ENCODE measurements at regions of chr2 and their contacts with region 1.

Region 1: DNA sequence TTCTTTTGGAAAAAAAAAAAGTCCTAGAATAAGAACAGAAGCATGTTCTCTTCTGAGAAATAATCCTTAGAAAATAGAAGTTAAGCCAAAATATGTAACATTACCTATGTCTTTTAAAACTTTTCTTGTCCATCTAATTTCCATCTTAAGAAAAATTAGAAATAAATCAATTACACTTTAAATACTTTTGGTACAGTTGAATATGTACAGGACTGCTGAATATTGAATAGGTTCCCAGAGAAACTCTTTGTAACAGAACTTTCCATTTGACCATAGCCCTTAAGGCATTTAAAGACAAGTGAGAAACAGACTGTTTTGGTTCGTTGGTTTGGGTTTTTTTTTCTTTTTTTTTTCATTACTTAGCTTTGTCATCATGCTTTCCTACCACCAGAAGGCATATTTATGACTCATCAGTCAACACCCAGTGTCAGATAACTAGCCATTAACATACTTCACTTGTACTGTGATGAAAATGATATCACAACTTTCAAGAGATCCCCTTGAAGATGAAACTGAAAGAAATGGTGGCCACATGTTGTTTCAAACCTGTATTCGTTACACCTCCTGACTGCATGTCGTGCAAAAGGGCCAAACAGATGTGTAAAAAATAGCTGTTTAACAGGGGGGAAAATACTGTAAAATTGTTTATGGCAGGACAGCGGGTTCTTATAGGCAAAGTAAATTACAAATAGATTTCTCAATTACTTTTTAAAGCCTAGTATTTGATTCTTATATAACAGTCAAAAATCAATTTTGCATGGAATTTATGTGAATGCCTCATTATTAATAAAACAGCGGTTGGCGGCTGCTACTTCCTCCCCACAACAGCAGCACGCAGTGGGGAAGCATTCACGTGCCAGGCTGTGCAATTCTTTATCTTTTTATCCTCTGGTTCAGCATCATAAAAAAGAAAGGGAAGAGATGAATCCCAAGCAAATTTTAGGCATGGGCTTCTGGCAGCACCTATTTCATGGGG is 280.7 kb upstream of the HNRNPA3 start:
- DNase-seq: no peak
- ATAC-seq: peak; percentile 89
- H3K4me3 ChIP-seq: no peak overlapping the region
- H3K4me3 Mint-ChIP-seq: peak overlapping the region in 2 of 10 donors; percentile 39 to 69
- H3K27ac ChIP-seq: no peak overlapping the region
- H3K27ac Mint-ChIP-seq: peak overlapping the region in 2 of 9 donors; percentile 11 to 90
- H3K4me1 ChIP-seq: peaks cover 0 to 7% of the 10 kb centered on the region in 2 donors
- H3K4me1 Mint-ChIP-seq: peaks cover 6 to 20% (median 8%) of the 10 kb centered on the region in 7 donors
- H3K27me3 ChIP-seq: no peaks in the 10 kb centered on the region
- H3K27me3 Mint-ChIP-seq: peaks cover 0 to 1% (median 0%) of the 10 kb centered on the region in 5 donors

Region 2: GRCh38 chr2:176821345-176821744 is 110.5 kb before region 1 on chr2:
- CTCF ChIA-PET with region 1: no interaction called
- POLR2A ChIA-PET with region 1: no interaction called
- intact Hi-C with region 1: loop called in 1 of 2 experiments (anchors 10 kb)
- DNase-seq: no peak
- ATAC-seq: no peak
- H3K4me3 ChIP-seq: no peak overlapping the region
- H3K4me3 Mint-ChIP-seq: no peak overlapping the region
- H3K27ac ChIP-seq: no peak overlapping the region
- H3K27ac Mint-ChIP-seq: peak overlapping the region in 1 of 9 donors; percentile 68
- H3K4me1 ChIP-seq: peaks cover 0 to 24% of the 10 kb centered on the region in 2 donors
- H3K4me1 Mint-ChIP-seq: peaks cover 13 to 67% (median 40%) of the 10 kb centered on the region in 7 donors
- H3K27me3 ChIP-seq: no peaks in the 10 kb centered on the region
- H3K27me3 Mint-ChIP-seq: peaks cover 0 to 9% (median 0%) of the 10 kb centered on the region in 5 donors

Region 3: GRCh38 chr2:176997074-176997791 is 65.4 kb after region 1 on chr2:
- CTCF ChIA-PET with region 1: no interaction called
- POLR2A ChIA-PET with region 1: no interaction called
- intact Hi-C with region 1: loop called in 1 of 2 experiments (anchors 5 kb)
- DNase-seq: peak in 5 of 9 donors; percentile 4 to 23 (median 10)
- ATAC-seq: peak; percentile 70
- H3K4me3 ChIP-seq: no peak overlapping the region
- H3K4me3 Mint-ChIP-seq: peak overlapping the region in 9 of 10 donors; percentile 0 to 75 (median 31)
- H3K27ac ChIP-seq: peak overlapping the region; percentile 17
- H3K27ac Mint-ChIP-seq: peak overlapping the region in 8 of 9 donors; percentile 3 to 92 (median 59)
- H3K4me1 ChIP-seq: peaks cover 0 to 6% of the 10 kb centered on the region in 2 donors
- H3K4me1 Mint-ChIP-seq: peaks cover 3 to 22% (median 15%) of the 10 kb centered on the region in 7 donors
- H3K27me3 ChIP-seq: no peaks in the 10 kb centered on the region
- H3K27me3 Mint-ChIP-seq: peaks cover 0 to 10% (median 0%) of the 10 kb centered on the region in 5 donors

Measured in naive thymus-derived CD4-positive, alpha-beta T cell (primary cell).